ENCODE measurements at regions of chr5 and their contacts with region 1.

Region 1: DNA sequence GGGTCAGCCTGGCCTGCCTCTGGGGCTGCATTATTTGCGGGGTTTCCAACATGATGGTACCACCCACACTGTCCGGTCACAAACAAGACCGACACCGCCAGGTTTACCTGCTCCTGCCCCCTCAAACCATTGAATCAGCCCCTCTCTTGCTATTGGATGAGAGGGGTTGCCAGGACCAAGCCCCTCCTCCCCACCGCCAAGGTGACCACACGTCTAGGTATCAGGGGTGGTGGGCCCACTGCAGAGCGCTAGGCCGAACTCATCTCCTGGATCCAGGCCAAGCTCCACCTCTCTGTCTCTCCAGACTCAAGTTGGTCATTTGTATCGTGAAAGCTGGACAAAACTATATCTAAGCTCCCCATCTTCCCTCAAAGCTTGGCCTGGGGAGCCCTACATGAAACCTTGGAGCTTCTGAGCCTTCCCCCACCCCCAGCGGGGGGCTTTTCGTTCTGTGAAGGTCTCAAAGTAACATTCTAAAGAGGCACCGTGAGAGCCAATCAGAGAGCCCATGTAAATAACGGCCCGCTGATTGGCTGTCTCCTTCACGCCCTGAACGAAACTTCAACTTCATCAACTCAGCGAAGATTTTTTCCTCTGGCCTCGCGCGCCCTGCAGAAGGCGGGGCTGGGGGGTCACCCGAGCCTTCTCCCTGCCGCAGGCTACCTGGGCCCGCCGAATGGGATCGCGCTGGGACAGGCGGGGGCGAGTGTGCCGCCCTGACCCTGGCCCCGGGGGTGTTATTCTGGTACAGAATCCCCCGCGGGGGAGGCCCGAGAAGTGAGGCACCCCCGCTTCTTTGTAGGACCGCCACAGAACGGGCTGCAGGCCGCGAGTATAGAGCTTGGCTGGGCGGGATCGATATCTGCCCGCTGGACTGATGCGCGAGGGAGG is 49.6 kb upstream of the PSD2 start:
- DNase-seq: peak; percentile 60
- ATAC-seq: peak; percentile 16
- H3K4me3 Mint-ChIP-seq: peak overlapping the region; percentile 89
- H3K27ac Mint-ChIP-seq: peak overlapping the region; percentile 93
- H3K4me1 Mint-ChIP-seq: peaks cover 74% of the 10 kb centered on the region
- H3K27me3 Mint-ChIP-seq: no peaks in the 10 kb centered on the region
- CTCF ChIP-seq: no peak

Region 2: DNA sequence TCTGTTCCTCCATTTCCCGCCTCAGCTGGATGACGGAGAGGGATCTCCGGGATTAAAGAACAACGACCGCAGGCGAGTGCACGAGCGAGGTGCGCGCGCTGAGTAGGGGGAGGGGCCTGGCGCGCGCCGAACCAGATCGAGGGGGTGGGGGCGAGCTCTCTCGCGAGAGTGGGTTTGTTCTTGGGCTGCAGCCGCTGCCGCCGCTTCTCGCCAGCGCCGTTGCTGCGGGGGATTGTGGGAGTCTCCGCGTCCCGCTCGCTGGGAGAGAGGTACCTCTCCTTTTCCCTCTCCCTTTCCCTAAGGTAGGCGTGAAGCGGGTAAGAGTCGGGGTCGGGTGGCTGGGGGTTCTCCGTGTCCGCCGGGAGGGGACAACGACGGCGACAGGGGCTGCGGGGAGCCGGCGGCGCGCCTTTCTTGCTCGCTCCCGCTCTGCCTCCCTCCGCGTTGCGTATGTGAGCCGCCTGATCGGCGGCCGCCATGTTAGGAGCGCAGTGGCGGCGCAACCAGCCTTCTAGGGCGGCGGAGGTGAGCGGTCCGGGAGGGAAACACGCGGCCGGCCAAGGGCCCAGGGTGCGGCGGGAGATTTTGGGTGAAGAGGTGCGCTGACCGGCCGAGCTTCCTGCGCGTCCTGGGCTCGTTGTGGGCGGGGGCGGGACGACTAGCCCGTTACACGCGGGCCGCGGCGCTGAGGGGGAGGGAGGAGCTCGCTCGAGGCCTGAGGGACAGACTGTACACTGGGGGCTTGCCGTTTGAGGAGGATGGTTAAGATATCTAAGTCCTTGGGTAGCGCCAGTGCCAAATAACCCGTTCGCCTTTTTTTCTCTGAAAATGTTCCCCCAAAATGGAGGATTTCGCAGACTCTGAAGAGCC is 452.3 kb before region 1 on chr5 and contains the start of gene MATR3:
- CTCF ChIA-PET with region 1: no interaction called
- POLR2A ChIA-PET with region 1: no interaction called
- intact Hi-C with region 1: loop called (anchors 5 kb)
- DNase-seq: peak; percentile 87
- ATAC-seq: peak; percentile 90
- H3K4me3 Mint-ChIP-seq: peak within 1 kb of the TSS; percentile 97
- H3K27ac Mint-ChIP-seq: peak within 1 kb of the TSS; percentile 96
- H3K4me1 Mint-ChIP-seq: peaks cover 48% of the 10 kb centered on the region
- H3K27me3 Mint-ChIP-seq: no peaks in the 10 kb centered on the region
- CTCF ChIP-seq: no peak
- total RNA-seq, gene MATR3: 242 and 294 TPM in 2 replicates

Region 3: DNA sequence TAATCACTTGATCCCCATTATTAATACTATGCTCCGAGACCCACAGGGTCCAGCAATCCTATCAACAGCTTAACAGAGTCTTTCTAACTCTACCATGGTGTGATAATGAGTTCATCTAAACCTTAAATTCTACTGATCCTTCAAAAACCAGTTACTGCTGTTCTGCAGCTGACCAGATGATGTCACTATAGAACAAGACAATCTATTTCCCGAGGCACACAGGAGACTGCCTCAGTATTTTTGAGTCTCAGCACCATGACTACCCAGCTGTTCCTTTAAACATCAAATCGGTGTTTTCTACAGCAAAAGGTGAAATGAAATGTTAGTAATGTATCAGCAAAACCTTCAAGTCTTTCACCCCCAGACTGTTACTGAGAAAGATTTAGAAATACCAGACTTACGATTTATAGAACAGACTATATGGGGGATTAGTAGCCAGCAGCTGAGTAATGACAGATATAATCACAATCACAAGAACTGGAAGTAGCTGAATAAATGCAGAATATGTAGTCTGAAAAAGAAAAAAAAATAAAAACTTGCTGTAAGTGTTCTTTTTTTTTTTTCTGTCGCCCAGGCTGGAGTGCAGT is 323.6 kb before region 1 on chr5:
- CTCF ChIA-PET with region 1: no interaction called
- POLR2A ChIA-PET with region 1: no interaction called
- intact Hi-C with region 1: no loop called
- DNase-seq: no peak
- ATAC-seq: peak; percentile 99
- H3K4me3 Mint-ChIP-seq: no peak overlapping the region
- H3K27ac Mint-ChIP-seq: no peak overlapping the region
- H3K4me1 Mint-ChIP-seq: peaks cover 5% of the 10 kb centered on the region
- H3K27me3 Mint-ChIP-seq: no peaks in the 10 kb centered on the region
- CTCF ChIP-seq: no peak

Region 4: GRCh38 chr5:139439013-139439903 is 306.8 kb before region 1 on chr5 and contains the start of gene DNAJC18:
- CTCF ChIA-PET with region 1: no interaction called
- POLR2A ChIA-PET with region 1: no interaction called
- intact Hi-C with region 1: loop called (anchors 1 kb)
- DNase-seq: peak; percentile 87
- ATAC-seq: peak; percentile 95
- H3K4me3 Mint-ChIP-seq: peak within 1 kb of the TSS; percentile 99
- H3K27ac Mint-ChIP-seq: peak within 1 kb of the TSS; percentile 99
- H3K4me1 Mint-ChIP-seq: peaks cover 12% of the 10 kb centered on the region
- H3K27me3 Mint-ChIP-seq: no peaks in the 10 kb centered on the region
- CTCF ChIP-seq: no peak
- total RNA-seq, gene DNAJC18: 9.1 and 9.6 TPM in 2 replicates

Region 5: GRCh38 chr5:139660923-139661814 is 84.9 kb before region 1 on chr5:
- CTCF ChIA-PET with region 1: no interaction called
- POLR2A ChIA-PET with region 1: interaction called, 11 read pairs
- intact Hi-C with region 1: no loop called
- DNase-seq: peak; percentile 69
- ATAC-seq: peak; percentile 71
- H3K4me3 Mint-ChIP-seq: peak overlapping the region; percentile 75
- H3K27ac Mint-ChIP-seq: peak overlapping the region; percentile 96
- H3K4me1 Mint-ChIP-seq: peaks cover 94% of the 10 kb centered on the region
- H3K27me3 Mint-ChIP-seq: no peaks in the 10 kb centered on the region
- CTCF ChIP-seq: no peak

Region 6: GRCh38 chr5:139690064-139690802 is 55.8 kb before region 1 on chr5:
- CTCF ChIA-PET with region 1: interaction called, 9 read pairs
- POLR2A ChIA-PET with region 1: interaction called, 6 read pairs
- intact Hi-C with region 1: loop called (anchors 1 kb)
- DNase-seq: no peak
- ATAC-seq: peak; percentile 56
- H3K4me3 Mint-ChIP-seq: no peak overlapping the region
- H3K27ac Mint-ChIP-seq: peak overlapping the region; percentile 67
- H3K4me1 Mint-ChIP-seq: peaks cover 53% of the 10 kb centered on the region
- H3K27me3 Mint-ChIP-seq: no peaks in the 10 kb centered on the region
- CTCF ChIP-seq: peak; percentile 19

Region 7: DNA sequence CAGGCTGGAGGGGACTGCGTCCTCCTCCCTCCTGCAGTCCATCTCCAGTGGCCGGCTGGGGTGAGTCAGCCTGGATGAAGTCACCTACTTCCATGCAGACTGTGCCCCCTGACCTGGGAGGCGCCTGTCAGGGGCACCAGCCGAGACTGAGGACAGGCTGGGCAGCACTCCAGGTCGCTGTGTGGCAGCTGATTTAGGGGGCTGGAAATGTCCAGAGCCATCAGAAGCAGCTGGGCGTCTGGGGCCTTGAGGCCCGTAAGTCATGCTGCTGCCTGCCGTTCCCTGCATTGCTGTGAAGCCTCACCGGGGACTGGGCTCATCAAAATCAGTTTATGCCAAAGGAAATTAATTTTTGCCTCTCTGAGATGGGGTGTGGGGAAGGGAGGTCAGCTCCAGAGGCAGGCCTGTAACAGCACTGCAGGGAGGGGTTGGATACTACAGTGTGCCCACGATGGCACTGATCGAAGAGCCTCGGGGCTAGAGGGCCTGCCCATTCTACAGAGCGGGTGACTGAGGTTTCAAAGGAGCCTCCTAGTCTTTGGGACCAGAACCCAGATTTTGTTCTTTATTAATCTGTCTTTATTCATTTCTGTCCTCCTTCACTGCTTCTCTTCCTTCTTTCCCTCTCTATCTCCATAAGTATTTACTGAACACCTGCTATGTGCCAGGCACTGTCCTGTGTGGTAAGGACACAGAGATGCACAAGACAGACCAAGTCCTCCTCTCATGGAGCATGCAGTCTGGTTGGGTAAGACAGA is 20.8 kb before region 1 on chr5:
- CTCF ChIA-PET with region 1: no interaction called
- POLR2A ChIA-PET with region 1: interaction called, 7 read pairs
- intact Hi-C with region 1: loop called (anchors 1 kb)
- DNase-seq: no peak
- ATAC-seq: no peak
- H3K4me3 Mint-ChIP-seq: no peak overlapping the region
- H3K27ac Mint-ChIP-seq: no peak overlapping the region
- H3K4me1 Mint-ChIP-seq: peaks cover 17% of the 10 kb centered on the region
- H3K27me3 Mint-ChIP-seq: no peaks in the 10 kb centered on the region
- CTCF ChIP-seq: no peak

Region 8: GRCh38 chr5:139765409-139766217 is 19.6 kb after region 1 on chr5:
- CTCF ChIA-PET with region 1: interaction called, 40 read pairs
- POLR2A ChIA-PET with region 1: interaction called, 28 read pairs
- intact Hi-C with region 1: loop called (anchors 1 kb)
- DNase-seq: peak; percentile 87
- ATAC-seq: peak; percentile 86
- H3K4me3 Mint-ChIP-seq: peak overlapping the region; percentile 74
- H3K27ac Mint-ChIP-seq: peak overlapping the region; percentile 56
- H3K4me1 Mint-ChIP-seq: peaks cover 25% of the 10 kb centered on the region
- H3K27me3 Mint-ChIP-seq: peaks cover 9% of the 10 kb centered on the region
- CTCF ChIP-seq: peak; percentile 98